Heart right ventricle (tissue), 16 donors: ENCODE measurements at regions of chr13 and their contacts with region 1.

Region 1: DNA sequence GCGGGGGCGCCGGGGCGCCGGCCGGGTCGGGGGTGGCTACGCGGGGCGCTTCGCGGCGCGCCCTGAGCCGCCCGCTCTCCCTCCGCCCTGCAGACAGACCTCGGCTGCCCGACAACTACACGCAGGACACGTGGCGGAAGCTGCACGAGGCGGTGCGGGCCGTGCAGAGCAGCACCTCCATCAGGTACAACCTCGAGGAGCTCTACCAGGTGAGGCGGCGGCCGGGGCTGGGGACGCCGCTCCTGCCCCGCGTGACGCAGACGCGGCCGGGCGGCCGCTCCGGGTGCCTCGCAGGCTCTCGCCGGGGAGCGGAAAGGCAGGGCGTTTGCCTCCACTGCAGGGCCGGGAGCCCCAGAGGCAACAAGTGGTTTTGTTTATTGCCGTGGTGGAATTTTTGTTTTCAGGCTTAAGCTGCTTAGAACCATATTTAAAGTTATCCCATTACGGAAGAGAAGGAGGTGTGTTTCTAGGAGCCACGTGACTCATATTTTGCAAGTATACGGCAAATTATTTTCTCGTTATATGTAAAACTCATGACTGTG is 538 bp downstream of the CUL4A start:
- DNase-seq: peak in 1 of 2 donors; percentile 54
- ATAC-seq: peak in 2 of 8 donors; percentile 8 to 16
- H3K4me3 ChIP-seq: peak overlapping the region; percentile 40 to 98 (median 86)
- H3K27ac ChIP-seq: peak overlapping the region; percentile 77 to 100 (median 98)
- H3K4me1 ChIP-seq: peaks cover 4 to 81% (median 75%) of the 10 kb centered on the region in 9 donors
- H3K27me3 ChIP-seq: no peaks in the 10 kb centered on the region
- CTCF ChIP-seq: no peak

Region 2: DNA sequence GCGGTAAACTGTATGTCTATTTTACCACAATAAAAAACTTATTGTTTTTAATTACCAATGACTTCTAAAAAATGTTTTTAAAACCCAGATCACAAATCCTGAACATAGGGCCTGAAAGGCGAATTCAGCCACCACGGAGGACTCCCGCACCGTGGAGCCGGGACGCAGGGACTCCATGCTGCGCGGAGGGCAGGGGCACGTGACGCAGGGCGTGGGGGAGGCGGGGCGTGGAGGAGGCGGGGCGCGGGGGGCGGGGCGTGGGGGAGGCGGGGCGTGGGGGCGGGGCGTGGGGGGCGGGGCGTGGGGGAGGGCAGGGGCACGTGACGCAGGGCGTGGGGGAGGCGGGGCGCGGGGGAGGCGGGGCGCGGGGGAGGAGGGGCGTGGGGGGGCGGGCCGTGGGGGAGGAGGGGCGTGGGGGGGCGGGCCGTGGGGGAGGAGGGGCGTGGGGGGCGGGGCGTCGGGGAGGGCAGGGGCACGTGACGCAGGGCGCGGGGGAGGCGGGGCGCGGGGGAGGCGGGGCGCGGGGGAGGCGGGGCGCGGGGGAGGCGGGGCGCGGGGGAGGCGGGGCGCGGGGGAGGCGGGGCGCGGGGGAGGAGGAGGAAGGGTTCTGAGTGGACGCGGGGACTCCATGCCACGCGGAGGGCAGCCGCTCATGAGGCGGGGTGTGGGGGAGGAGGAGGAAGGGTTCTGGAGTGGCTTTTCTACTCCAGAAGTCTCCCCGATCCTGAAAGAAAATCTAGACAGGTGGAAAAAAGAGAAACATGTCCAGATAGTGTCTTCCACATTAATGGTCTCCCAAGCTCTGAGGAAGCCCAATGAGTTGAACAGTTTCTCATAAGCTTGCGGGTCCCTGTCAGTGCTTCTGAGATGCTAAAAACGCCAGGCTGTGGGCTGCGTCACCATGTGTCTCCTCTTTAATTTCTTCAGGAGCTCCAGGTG is 55.9 kb before region 1 on chr13:
- intact Hi-C with region 1: loop called in 1 of 10 experiments (anchors 10 kb)
- DNase-seq: peak; percentile 83 to 86
- ATAC-seq: peak; percentile 68 to 92 (median 86)
- H3K4me3 ChIP-seq: peak overlapping the region; percentile 39 to 62 (median 48)
- H3K27ac ChIP-seq: peak overlapping the region; percentile 53 to 93 (median 87)
- H3K4me1 ChIP-seq: peaks cover 8 to 25% (median 12%) of the 10 kb centered on the region in 9 donors
- H3K27me3 ChIP-seq: peaks cover 0 to 20% (median 1%) of the 10 kb centered on the region in 7 donors
- CTCF ChIP-seq: no peak

Region 3: GRCh38 chr13:113187263-113187669 is 22.7 kb before region 1 on chr13:
- intact Hi-C with region 1: loop called in 1 of 10 experiments (anchors 2 kb)
- DNase-seq: peak; percentile 82 to 89
- ATAC-seq: peak; percentile 89 to 100 (median 97)
- H3K4me3 ChIP-seq: peak overlapping the region in 3 of 10 donors; percentile 2 to 18 (median 16)
- H3K27ac ChIP-seq: peak overlapping the region in 8 of 10 donors; percentile 63 to 85 (median 69)
- H3K4me1 ChIP-seq: peaks cover 0 to 30% (median 10%) of the 10 kb centered on the region in 9 donors
- H3K27me3 ChIP-seq: no peaks in the 10 kb centered on the region
- CTCF ChIP-seq: peak in 4 of 9 donors; percentile 8 to 35 (median 16)

Region 4: GRCh38 chr13:113337556-113337955 is 127.6 kb after region 1 on chr13:
- intact Hi-C with region 1: no loop called
- DNase-seq: no peak
- ATAC-seq: peak in 1 of 8 donors; percentile 44
- H3K4me3 ChIP-seq: no peak overlapping the region
- H3K27ac ChIP-seq: no peak overlapping the region
- H3K4me1 ChIP-seq: no peaks in the 10 kb centered on the region
- H3K27me3 ChIP-seq: no peaks in the 10 kb centered on the region
- CTCF ChIP-seq: no peak